ENCODE measurements at regions of chr7 and their contacts with region 1.

Region 1: DNA sequence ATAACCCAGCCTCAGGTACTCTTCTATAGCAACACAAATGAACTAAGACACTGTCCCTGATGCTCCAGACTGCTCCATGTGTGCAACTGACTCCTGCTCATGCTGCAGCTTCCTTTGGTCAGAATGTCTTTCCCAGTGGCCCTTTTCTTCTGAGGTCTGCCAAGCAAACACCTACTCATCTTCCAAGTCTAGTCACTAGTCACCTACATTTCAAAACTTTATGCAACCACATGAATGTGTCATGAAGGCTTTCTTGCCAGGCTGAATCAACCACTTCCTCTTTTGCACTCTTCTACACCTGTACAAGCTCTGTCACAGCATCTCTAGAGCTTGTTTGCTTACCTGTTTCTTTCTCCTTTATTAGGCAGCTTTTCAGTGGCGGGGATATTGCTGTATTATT is 75.8 kb downstream of the LSMEM1 start:
- DNase-seq: peak; percentile 65
- H3K4me3 Mint-ChIP-seq: no peak overlapping the region
- H3K27ac Mint-ChIP-seq: no peak overlapping the region
- H3K4me1 Mint-ChIP-seq: peaks cover 8% of the 10 kb centered on the region
- H3K27me3 Mint-ChIP-seq: no peaks in the 10 kb centered on the region
- CTCF ChIP-seq: no peak

Region 2: DNA sequence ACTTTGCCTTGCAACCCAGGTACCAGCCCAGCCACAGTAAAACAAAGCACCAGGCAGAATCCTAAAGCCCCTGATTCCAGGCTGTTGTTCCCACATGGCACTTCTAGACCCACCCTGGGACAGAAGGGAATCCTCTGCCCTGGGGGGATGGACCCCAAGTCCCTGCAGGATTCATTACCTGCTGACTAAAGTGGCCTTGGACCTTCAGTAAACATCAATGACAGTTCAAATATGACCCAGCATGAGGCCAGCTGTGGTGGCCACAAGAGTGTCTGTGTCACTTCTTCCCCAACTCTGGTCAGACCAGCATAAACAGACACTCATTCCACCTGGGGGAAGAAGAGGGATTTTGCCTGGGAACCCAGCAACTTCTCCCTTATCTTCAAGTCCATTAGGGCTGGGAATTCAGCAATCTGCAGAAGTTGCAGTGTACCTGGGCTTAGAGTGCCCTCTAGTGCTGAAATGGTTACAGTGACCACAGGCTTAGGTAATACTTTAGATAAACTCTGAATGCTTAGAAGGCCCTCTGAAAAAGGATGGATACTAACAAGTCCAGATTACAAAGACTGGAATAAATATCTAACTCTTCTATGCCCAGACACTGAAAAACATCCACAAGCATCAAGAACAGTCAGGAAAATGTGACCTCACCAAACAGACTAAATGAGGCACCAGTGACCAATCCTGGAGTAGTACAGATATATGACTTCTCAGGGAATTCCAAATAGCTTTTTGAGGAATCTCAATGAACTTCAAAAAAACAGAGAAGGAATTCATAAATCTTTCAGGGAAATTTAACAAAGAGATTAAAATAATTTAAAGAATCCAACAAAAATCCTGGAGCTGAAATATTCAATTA is 342.0 kb after region 1 on chr7:
- CTCF ChIA-PET with region 1: interaction called, 11 read pairs
- POLR2A ChIA-PET with region 1: interaction called, 4 read pairs
- intact Hi-C with region 1: no loop called
- DNase-seq: peak; percentile 78
- H3K4me3 Mint-ChIP-seq: no peak overlapping the region
- H3K27ac Mint-ChIP-seq: peak overlapping the region; percentile 19
- H3K4me1 Mint-ChIP-seq: no peaks in the 10 kb centered on the region
- H3K27me3 Mint-ChIP-seq: no peaks in the 10 kb centered on the region
- CTCF ChIP-seq: peak; percentile 80

Region 3: GRCh38 chr7:113128028-113128427 is 571.4 kb after region 1 on chr7:
- CTCF ChIA-PET with region 1: no interaction called
- POLR2A ChIA-PET with region 1: no interaction called
- intact Hi-C with region 1: loop called (anchors 5 kb)
- DNase-seq: peak; percentile 46
- H3K4me3 Mint-ChIP-seq: no peak overlapping the region
- H3K27ac Mint-ChIP-seq: no peak overlapping the region
- H3K4me1 Mint-ChIP-seq: no peaks in the 10 kb centered on the region
- H3K27me3 Mint-ChIP-seq: no peaks in the 10 kb centered on the region
- CTCF ChIP-seq: no peak